ENCODE measurements at regions of chr9 and their contacts with region 1.

Region 1: DNA sequence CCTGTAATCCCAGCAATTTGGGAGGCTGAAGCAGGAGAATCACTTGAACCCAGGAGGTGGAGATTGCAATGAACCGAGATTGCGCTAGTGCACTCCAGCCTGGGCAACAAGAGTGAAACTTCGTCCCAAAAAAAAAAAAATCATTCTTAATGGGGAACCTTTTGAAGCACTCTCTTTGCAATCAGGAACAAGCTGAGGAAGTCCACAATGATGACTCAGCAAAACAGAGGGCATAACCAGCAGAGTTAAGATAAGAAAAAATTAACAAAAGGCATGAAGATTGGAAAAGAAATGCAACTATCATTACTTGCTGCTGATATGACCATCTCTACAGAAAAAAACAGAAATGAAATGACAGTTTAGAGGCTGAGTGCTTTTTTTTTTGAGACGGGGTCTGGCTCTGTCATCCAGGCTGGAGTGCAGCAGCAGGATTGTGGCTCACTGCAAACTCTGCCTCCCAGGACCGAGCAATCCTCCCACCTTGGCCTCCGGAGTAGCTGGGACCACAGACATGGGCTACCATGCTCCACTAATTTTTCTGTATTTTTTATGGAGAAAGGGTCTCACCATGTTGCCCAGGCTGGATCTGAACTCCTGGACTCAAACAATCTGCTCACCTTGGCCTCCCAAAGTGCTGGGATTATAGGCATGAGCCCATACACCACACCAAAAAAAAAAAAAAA is 88.0 kb downstream of the FNBP1 start:
- DNase-seq: no peak
- H3K4me3 ChIP-seq: no peak overlapping the region
- H3K27ac ChIP-seq: peak overlapping the region; percentile 43; the same call in 1 of the 2 replicates
- H3K4me1 ChIP-seq: peaks cover 8% of the 10 kb centered on the region
- H3K27me3 ChIP-seq: no peaks in the 10 kb centered on the region
- CTCF ChIP-seq: no peak

Region 2: DNA sequence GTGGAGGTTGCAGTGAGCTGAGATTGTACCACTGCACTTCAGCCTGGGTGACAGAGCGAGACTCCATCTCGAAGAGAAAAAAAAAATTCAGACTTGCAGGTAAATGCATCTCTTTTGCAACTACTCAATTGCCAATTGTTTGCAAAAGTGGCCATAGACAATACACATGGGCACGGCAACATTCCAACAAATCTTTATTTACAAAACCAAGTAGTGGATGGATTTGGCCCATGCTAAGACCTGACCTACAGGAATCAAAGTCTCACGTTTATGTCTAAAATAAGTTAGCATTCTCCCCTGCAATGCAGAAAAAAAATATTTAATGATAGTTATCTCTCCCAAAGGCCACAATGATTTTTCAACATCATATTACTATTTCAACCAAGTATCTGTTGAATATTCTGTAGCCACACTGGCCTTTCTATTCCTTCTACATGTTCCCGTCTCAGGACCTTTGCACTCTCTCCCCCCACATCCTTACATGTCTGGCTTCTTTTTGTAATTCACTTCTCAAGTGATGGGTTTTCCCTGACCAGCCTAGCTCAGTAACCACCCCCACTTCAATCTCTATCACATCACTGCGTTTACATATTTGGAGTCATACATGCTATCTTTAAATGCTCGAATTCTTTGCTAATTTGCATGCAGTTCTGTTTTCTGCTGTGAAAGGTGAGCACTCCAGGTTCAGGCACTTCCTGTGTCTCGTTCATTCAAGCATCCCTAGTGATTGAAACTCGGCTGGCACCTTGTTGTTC is 33.8 kb after region 1 on chr9:
- CTCF ChIA-PET with region 1: no interaction called
- POLR2A ChIA-PET with region 1: no interaction called
- intact Hi-C with region 1: no loop called
- DNase-seq: no peak
- H3K4me3 ChIP-seq: no peak overlapping the region
- H3K27ac ChIP-seq: no peak overlapping the region
- H3K4me1 ChIP-seq: peaks cover 30% of the 10 kb centered on the region
- H3K27me3 ChIP-seq: no peaks in the 10 kb centered on the region
- CTCF ChIP-seq: no peak

Region 3: GRCh38 chr9:130010151-130010988 is 55.4 kb after region 1 on chr9:
- CTCF ChIA-PET with region 1: no interaction called
- POLR2A ChIA-PET with region 1: interaction called, 14 read pairs
- intact Hi-C with region 1: no loop called
- DNase-seq: no peak
- H3K4me3 ChIP-seq: no peak overlapping the region
- H3K27ac ChIP-seq: no peak overlapping the region
- H3K4me1 ChIP-seq: no peaks in the 10 kb centered on the region
- H3K27me3 ChIP-seq: no peaks in the 10 kb centered on the region
- CTCF ChIP-seq: no peak

Region 4: DNA sequence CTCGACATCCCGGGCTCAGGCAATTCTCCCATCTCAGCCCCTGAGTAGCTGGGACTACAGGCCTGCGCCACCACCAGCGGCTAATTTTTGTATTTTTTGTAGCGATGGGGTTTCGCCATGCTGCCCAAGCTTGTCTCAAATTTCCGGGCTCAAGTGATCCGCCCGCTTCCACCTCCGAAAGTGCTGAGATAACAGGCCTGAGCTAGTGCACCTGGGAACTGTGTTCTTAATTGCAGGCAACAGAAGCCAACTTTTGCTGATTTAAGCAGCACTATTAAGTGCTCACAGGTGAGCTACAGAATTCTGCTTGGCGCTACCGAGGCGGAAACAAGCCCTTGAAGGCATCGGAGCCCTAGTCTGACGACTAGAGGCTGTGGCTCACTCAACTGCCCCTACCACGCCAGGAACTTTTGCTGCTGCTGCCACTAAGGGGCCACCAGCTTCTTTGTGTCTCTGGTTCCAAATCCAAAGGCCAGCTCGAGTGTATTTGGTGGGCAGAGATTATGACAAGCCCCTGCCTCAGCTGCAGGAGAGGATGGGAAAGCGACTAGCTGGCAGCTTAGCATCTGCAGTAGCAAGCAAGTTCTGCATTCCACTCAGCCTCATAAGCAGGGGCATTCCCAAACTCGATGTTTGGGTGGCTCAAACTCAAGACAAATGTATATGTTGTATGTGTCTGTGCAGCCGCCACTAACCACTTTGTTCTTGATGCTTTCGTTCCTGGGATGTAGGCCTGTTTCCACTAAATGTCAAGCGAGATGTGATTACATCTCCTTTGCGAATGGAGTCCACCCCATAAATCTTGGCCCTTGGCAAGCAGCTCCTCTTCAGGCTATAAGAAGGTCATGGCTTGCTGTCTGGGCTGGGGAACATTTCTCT is 300.0 kb after region 1 on chr9:
- CTCF ChIA-PET with region 1: no interaction called
- POLR2A ChIA-PET with region 1: no interaction called
- intact Hi-C with region 1: no loop called
- DNase-seq: no peak
- H3K4me3 ChIP-seq: no peak overlapping the region
- H3K27ac ChIP-seq: no peak overlapping the region
- H3K4me1 ChIP-seq: no peaks in the 10 kb centered on the region
- H3K27me3 ChIP-seq: peaks cover 12% of the 10 kb centered on the region
- CTCF ChIP-seq: no peak

Measured in PC-9 (cell line).